Mammary epithelial cell (primary cell): ENCODE measurements at regions of chr16 and their contacts with region 1.

Region 1: DNA sequence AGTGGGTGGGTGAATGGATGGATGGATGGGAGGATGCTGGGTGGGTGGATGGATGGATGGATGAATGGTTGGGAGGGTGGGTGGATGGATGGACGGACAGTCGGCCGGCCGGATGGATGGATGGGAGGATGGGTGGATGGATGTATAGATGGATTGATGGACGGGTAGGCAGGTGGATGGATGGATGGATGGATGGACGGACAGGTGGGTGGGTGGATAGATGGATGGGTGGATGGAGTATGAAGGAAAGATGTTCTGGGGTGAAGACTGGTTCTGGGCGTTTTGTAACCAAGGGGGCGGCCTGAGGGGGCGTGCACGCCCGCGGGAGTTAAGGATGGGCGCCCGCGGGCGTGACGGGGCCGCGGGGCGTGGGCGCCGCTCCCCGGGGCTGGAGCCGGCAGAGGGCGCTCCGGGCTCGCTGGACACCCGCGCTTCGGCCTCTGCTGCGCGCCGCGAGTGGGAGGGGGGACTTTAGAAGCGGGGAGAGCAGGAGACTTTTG is at the start of gene NECAB2:
- DNase-seq: no peak
- H3K4me3 ChIP-seq: peak within 1 kb of the TSS in 2 of 3 experiments; percentile 6 to 34
- H3K27ac ChIP-seq: no peak within 1 kb of the TSS
- H3K4me1 ChIP-seq: no peaks in the 10 kb centered on the region
- H3K27me3 ChIP-seq: peaks cover 6% of the 10 kb centered on the region
- CTCF ChIP-seq: peak; percentile 20 to 60
- total RNA-seq, gene NECAB2: 0.87 TPM in 1 of 2 donors, not detected in the other

Region 2: DNA sequence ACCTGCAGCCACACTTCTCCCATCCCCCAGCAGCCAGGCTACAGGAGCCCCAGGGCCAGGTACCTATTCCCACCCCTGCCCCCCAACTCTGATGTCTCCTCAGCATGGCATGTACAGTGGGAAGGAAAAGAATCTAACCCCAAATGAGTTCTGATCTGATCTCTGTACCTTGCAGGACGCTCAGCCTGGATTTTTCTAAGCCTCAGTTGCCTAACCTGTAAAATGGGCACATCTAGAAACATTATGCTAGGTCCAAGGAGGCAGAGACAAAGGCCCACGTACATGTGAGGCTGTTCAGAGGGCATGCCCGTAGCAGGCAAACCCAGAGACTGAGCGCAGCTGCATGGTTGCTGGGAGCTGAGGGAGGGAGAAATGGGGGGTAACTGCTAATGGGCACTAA is 39.7 kb after region 1 on chr16:
- CTCF ChIA-PET with region 1: interaction called, 11 read pairs
- dilution Hi-C with region 1: no loop called
- in situ Hi-C with region 1: no loop called
- intact Hi-C with region 1: no loop called
- DNase-seq: no peak
- H3K4me3 ChIP-seq: no peak overlapping the region
- H3K27ac ChIP-seq: no peak overlapping the region
- H3K4me1 ChIP-seq: no peaks in the 10 kb centered on the region
- H3K27me3 ChIP-seq: no peaks in the 10 kb centered on the region
- CTCF ChIP-seq: no peak